ENCODE measurements at regions of chr19 and their contacts with region 1.

Region 1: GRCh38 chr19:17932485-17933338 is at the start of gene CCDC124:
- DNase-seq: peak; percentile 87 to 96 (median 91)
- ATAC-seq: peak; percentile 97
- H3K4me3 Mint-ChIP-seq: peak within 1 kb of the TSS; percentile 86 to 97 (median 93)
- H3K27ac Mint-ChIP-seq: peak within 1 kb of the TSS; percentile 85 to 99 (median 97)
- H3K4me1 Mint-ChIP-seq: peaks cover 6 to 29% (median 23%) of the 10 kb centered on the region in 4 donors
- H3K27me3 Mint-ChIP-seq: peaks cover 0 to 3% (median 0%) of the 10 kb centered on the region in 5 donors
- polyA plus RNA-seq, gene CCDC124: 36.4 to 53.6 (median 43.5) TPM

Region 2: DNA sequence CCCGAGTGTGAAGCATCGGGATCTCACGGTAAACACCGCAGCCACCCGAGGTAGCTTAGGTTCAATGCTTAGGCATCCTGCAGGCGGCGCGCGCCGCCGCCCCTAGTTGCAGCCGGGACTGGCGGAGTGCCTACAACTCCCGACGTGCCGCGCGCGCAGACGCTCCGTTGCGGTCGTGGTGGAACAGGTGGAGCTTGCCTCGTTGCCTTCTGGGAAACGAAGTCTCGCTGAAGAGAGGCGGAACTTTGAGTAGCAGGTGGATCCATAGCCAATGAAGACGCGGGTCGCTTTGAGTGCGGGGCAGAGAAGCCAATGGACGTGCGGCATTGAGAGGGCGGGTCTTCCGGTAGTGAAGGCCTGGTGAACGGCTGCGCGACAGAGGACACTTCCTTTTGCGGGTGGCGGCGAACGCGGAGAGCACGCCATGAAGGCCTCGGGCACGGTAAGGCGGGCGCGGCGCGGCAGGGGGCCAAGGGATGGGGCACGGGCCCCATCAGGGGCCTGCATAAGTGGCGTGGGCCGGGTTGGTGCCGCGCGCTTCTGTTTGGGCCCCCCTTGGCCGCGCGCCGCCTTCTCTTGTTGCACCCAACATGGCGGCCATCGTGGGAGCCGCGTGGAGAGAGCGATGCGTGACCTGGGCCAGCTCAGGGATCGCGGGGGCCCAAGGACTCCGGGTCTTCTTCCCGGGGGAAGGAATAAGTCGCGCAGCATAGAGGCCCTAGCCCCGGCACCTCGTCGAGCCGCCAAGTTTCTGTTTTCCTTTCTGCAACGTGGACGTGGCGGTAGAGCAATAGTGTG is 73.0 kb before region 1 on chr19 and contains the start of gene RPL18A:
- POLR2A ChIA-PET with region 1: interaction called, 292 read pairs
- DNase-seq: peak; percentile 91 to 99 (median 98)
- ATAC-seq: peak; percentile 94 to 95
- H3K4me3 Mint-ChIP-seq: peak within 1 kb of the TSS; percentile 91 to 100 (median 99)
- H3K27ac Mint-ChIP-seq: peak within 1 kb of the TSS; percentile 95 to 100 (median 98)
- H3K4me1 Mint-ChIP-seq: peaks cover 19 to 42% (median 39%) of the 10 kb centered on the region in 4 donors
- H3K27me3 Mint-ChIP-seq: peaks cover 0 to 1% (median 0%) of the 10 kb centered on the region in 5 donors
- polyA plus RNA-seq, gene RPL18A: 3,790 to 4,859 (median 4,546) TPM

Region 3: GRCh38 chr19:17865364-17866311 is 67.1 kb before region 1 on chr19:
- POLR2A ChIA-PET with region 1: interaction called, 292 read pairs
- DNase-seq: no peak
- ATAC-seq: no peak
- H3K4me3 Mint-ChIP-seq: peak overlapping the region in 3 of 10 donors; percentile 2 to 29 (median 16)
- H3K27ac Mint-ChIP-seq: peak overlapping the region in 8 of 10 donors; percentile 33 to 76 (median 52)
- H3K4me1 Mint-ChIP-seq: peaks cover 13 to 20% (median 18%) of the 10 kb centered on the region in 4 donors
- H3K27me3 Mint-ChIP-seq: no peaks in the 10 kb centered on the region

Region 4: DNA sequence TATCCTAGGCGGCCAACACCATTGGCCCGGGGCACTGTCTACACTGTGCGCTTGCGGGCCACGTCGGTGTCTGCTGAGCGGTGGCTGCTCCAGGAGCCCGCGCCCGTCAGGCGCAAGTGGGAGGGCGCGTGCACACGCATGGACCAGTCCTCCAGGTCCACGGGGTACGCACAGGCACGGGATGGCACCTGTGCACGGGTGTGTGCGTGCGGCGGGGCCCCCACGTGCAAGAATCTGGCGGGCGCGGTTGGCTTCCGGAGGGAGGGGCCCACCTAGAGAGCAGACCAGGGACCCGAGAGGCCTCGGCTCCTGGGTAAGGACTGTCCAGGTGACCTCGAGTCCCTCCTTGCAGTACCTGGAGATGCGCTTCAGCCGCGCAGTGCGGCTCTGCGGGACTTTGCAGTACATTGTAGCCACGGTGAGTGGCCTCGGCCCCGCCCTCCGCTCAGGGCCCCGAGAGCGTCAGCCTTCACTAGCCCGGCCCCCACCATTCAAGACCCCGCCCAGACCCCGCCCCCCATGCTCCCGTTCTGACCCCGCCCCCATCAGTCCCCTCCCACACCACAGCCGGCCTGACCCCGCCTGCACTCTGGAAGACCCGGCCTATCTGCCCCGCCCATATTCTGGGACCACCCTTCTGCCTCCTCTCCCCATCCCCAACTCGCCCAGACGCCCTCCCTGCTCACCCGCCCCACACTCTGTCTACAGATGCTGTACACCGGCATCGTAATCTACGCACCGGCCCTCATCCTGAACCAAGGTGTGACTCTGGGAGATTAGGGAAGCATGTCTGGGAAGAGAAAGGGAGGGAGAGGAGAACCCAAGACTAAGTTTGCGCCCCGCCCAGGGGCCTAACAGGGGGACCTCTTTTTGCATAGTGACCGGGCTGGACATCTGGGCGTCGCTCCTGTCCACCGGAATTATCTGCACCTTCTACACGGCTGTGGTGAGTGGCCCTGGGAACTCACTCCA is 58.6 kb before region 1 on chr19:
- POLR2A ChIA-PET with region 1: interaction called, 10 read pairs
- DNase-seq: peak; percentile 49 to 83 (median 68)
- ATAC-seq: peak; percentile 74 to 81
- H3K4me3 Mint-ChIP-seq: peak overlapping the region; percentile 69 to 89 (median 80)
- H3K27ac Mint-ChIP-seq: peak overlapping the region in 8 of 10 donors; percentile 25 to 92 (median 76)
- H3K4me1 Mint-ChIP-seq: peaks cover 2 to 30% (median 17%) of the 10 kb centered on the region in 4 donors
- H3K27me3 Mint-ChIP-seq: peaks cover 0 to 2% (median 0%) of the 10 kb centered on the region in 5 donors

Region 5: DNA sequence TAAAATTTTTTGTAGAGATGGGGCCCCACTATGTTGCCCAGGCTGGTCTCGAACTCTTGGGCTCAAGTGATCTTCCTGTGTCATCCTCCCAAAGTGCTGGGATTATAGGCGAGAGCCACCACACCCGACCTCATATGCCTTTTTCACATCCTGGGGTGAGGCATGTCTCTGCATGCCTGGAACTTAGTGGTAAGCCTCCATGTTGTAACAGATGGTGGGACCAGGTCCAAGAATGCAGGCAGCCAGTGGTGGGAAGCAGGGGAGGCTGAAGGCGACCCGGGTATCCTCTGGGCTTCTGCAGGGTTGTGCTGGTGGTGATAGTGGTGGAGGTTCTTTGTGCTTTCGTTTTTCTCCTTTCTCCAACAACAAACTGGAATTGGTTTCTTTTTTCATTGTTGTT is 30.0 kb before region 1 on chr19:
- POLR2A ChIA-PET with region 1: no interaction called
- DNase-seq: no peak
- ATAC-seq: no peak
- H3K4me3 Mint-ChIP-seq: no peak overlapping the region
- H3K27ac Mint-ChIP-seq: no peak overlapping the region
- H3K4me1 Mint-ChIP-seq: no peaks in the 10 kb centered on the region
- H3K27me3 Mint-ChIP-seq: peaks cover 9 to 18% (median 10%) of the 10 kb centered on the region in 5 donors

Region 6: GRCh38 chr19:17947815-17948513 is 15.3 kb after region 1 on chr19:
- POLR2A ChIA-PET with region 1: interaction called, 16 read pairs
- DNase-seq: peak; percentile 89 to 99 (median 95)
- ATAC-seq: peak; percentile 58 to 71
- H3K4me3 Mint-ChIP-seq: peak overlapping the region; percentile 63 to 91 (median 80)
- H3K27ac Mint-ChIP-seq: peak overlapping the region in 7 of 10 donors; percentile 60 to 99 (median 92)
- H3K4me1 Mint-ChIP-seq: peaks cover 25 to 61% (median 50%) of the 10 kb centered on the region in 4 donors
- H3K27me3 Mint-ChIP-seq: peaks cover 11 to 36% (median 23%) of the 10 kb centered on the region in 5 donors

Region 7: DNA sequence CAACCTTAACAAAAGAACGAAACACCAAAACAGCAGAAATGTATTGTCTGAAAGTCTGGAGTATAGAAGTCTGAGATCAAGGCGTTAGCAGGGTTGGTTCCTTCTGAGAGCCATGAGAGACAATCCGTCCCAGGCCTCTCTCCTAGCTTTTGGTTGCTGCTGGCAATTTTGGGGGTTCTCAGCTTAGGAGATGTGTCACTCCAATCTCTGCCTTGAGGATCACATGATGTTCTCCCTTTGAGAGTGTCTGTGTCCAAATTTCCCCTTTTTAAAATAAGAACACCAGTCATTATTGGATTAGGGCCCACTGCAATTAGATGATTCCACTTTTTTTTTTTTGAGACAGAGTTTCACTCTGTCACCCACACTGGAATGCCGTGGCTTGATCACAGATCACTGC is 44.3 kb after region 1 on chr19:
- POLR2A ChIA-PET with region 1: no interaction called
- DNase-seq: no peak
- ATAC-seq: no peak
- H3K4me3 Mint-ChIP-seq: no peak overlapping the region
- H3K27ac Mint-ChIP-seq: no peak overlapping the region
- H3K4me1 Mint-ChIP-seq: peaks cover 0 to 7% (median under 1%) of the 10 kb centered on the region in 4 donors
- H3K27me3 Mint-ChIP-seq: peaks cover 3 to 24% (median 9%) of the 10 kb centered on the region in 5 donors

Region 8: GRCh38 chr19:18408053-18408476 is 475.4 kb after region 1 on chr19:
- POLR2A ChIA-PET with region 1: no interaction called
- DNase-seq: no peak
- ATAC-seq: peak in 1 of 2 donors; percentile 32
- H3K4me3 Mint-ChIP-seq: no peak overlapping the region
- H3K27ac Mint-ChIP-seq: no peak overlapping the region
- H3K4me1 Mint-ChIP-seq: peaks cover 0 to 12% (median 4%) of the 10 kb centered on the region in 4 donors
- H3K27me3 Mint-ChIP-seq: peaks cover 2 to 13% (median 4%) of the 10 kb centered on the region in 5 donors

Measured in naive thymus-derived CD8-positive, alpha-beta T cell (primary cell).